Mammary epithelial cell (primary cell): ENCODE measurements at regions of chr15 and their contacts with region 1.

Region 1: GRCh38 chr15:81087066-81087465 is 47.0 kb upstream of the CFAP161 start:
- DNase-seq: no peak
- H3K4me3 ChIP-seq: no peak overlapping the region
- H3K27ac ChIP-seq: no peak overlapping the region
- H3K4me1 ChIP-seq: peaks cover 2% of the 10 kb centered on the region
- H3K27me3 ChIP-seq: no peaks in the 10 kb centered on the region
- CTCF ChIP-seq: no peak

Region 2: GRCh38 chr15:81023483-81024264 is 63.4 kb before region 1 on chr15:
- CTCF ChIA-PET with region 1: no interaction called
- dilution Hi-C with region 1: loop called (anchors 5 kb)
- in situ Hi-C with region 1: no loop called
- intact Hi-C with region 1: no loop called
- DNase-seq: no peak
- H3K4me3 ChIP-seq: no peak overlapping the region
- H3K27ac ChIP-seq: no peak overlapping the region
- H3K4me1 ChIP-seq: no peaks in the 10 kb centered on the region
- H3K27me3 ChIP-seq: no peaks in the 10 kb centered on the region
- CTCF ChIP-seq: no peak

Region 3: GRCh38 chr15:81049835-81050234 is 37.2 kb before region 1 on chr15:
- CTCF ChIA-PET with region 1: no interaction called
- dilution Hi-C with region 1: no loop called
- in situ Hi-C with region 1: no loop called
- intact Hi-C with region 1: no loop called
- DNase-seq: no peak
- H3K4me3 ChIP-seq: no peak overlapping the region
- H3K27ac ChIP-seq: no peak overlapping the region
- H3K4me1 ChIP-seq: no peaks in the 10 kb centered on the region
- H3K27me3 ChIP-seq: no peaks in the 10 kb centered on the region
- CTCF ChIP-seq: no peak